Uterus (tissue), 4 donors: ENCODE measurements at regions of chr10 and their contacts with region 1.

Region 1: GRCh38 chr10:113385021-113385999 is 167.5 kb upstream of the HABP2 start:
- DNase-seq: peak; percentile 88 to 89
- H3K4me3 ChIP-seq: no peak overlapping the region
- H3K27ac ChIP-seq: peak overlapping the region; percentile 57 to 83
- H3K4me1 ChIP-seq: peaks cover 0 to 7% of the 10 kb centered on the region in 2 donors
- H3K27me3 ChIP-seq: no peaks in the 10 kb centered on the region
- CTCF ChIP-seq: peak; percentile 86 to 93 (median 88)
- POLR2A ChIP-seq: no peak

Region 2: DNA sequence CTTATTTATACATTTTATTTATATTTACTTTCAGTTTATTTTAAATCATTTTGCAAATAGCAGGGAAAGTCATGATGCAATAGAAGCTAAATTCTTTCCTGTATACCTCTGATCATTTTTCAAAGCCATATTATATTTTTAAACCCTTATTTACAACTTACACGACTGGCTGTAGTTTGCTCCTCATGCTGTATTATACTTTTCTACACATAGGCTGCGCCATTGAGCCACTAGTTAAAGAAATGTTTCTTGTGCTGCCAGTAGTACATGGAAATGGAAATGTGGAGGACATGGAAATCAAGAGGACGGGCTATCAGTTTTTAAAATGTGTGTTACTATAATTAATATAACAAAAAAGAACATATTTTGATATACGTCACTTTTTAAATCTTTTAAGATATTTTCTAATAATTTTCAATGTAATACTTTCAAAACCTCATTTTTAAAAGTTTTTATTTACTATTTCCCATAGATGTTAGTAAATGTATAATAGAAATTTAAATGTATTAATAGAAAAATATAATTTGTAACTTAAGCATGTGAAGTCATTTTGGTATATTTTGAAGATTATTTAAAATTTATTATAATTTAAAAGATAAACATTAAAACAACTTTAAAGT is 819.8 kb before region 1 on chr10:
- intact Hi-C with region 1: loop called (anchors 10 kb)
- DNase-seq: peak in 1 of 2 donors; percentile 23
- H3K4me3 ChIP-seq: no peak overlapping the region
- H3K27ac ChIP-seq: no peak overlapping the region
- H3K4me1 ChIP-seq: no peaks in the 10 kb centered on the region
- H3K27me3 ChIP-seq: no peaks in the 10 kb centered on the region
- CTCF ChIP-seq: peak; percentile 43 to 62 (median 48)
- POLR2A ChIP-seq: no peak

Region 3: DNA sequence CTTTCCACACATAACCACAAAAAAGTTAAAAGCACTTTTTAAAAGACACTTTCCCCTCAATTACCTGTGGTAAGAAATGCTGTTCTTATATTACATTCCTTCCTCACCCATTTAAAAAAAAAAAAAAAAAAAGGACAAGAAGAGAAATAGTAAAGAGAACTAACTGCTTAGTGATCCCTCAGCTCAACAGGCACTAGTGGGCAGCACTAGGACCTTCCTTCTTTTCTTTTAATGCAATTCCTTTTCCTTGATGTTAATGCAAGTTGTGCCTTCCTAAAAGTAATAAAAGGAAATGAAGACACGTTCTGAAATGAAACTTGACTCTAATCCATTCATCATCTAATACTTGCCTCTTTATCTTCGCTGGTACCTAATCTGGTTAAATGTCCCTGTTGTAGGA is 245.6 kb before region 1 on chr10:
- intact Hi-C with region 1: loop called (anchors 10 kb)
- DNase-seq: no peak
- H3K4me3 ChIP-seq: no peak overlapping the region
- H3K27ac ChIP-seq: peak overlapping the region in 1 of 2 donors; percentile 15
- H3K4me1 ChIP-seq: peaks cover 0 to 4% of the 10 kb centered on the region in 2 donors
- H3K27me3 ChIP-seq: no peaks in the 10 kb centered on the region
- CTCF ChIP-seq: no peak
- POLR2A ChIP-seq: no peak

Region 4: DNA sequence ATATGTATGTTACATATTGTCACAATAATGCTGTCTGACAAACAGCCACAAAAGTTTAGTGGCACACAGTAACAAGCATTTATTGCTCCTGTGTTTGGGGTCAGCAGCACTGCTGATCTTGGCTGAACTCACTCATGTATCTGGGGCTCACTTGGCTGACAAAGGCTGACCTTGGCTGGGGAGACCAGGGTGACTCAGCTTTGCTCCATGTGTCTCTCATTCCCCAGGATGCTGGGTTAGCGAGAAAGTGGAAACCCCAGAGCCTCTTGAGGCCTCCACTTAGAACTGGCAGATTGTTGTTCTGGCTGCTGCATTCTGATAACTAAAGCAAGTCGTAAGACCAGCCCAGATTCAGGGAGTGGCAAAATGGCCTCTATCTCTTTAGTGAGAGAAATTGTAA is 49.7 kb before region 1 on chr10:
- intact Hi-C with region 1: no loop called
- DNase-seq: no peak
- H3K4me3 ChIP-seq: no peak overlapping the region
- H3K27ac ChIP-seq: no peak overlapping the region
- H3K4me1 ChIP-seq: no peaks in the 10 kb centered on the region
- H3K27me3 ChIP-seq: no peaks in the 10 kb centered on the region
- CTCF ChIP-seq: no peak
- POLR2A ChIP-seq: no peak